Colonic mucosa (tissue), 4 donors: ENCODE measurements at regions of chr5 and their contacts with region 1.

Region 1: DNA sequence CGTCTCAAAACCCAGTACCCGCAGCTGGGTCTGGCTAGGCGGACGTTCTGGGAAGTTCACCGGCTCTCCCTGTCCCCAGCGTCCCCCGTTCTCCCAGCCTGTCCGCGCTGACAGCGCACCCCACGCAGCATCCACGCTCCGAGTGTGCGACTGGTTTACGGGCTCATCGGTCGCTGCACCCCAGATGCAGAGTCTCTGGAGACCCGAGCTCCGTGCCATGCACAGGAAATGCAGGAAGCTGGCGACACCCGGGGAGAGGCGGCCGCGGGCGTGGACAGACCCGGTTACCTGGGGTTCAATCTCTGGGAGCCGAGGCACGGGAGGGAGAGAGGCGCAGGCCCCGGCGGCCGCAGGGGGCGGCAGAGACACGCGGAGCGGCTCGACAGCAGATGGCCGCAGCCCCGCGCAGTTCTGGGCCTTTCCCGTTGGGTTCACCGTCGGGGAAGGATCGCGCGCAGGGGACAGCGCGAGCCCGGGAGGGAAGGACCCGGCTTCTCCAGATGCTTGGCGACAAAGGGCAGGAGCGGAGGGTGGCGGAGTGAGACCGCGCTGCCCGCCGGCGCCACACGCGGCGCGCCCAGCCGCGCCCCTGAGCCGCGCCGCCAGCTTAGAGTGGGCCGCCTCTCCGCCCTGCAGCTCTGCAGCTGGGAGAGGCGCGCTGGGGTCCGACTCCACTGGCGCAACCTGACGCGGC is 558 bp downstream of the SHROOM1 start:
- DNase-seq: peak; percentile 84
- H3K4me3 ChIP-seq: peak overlapping the region; percentile 85
- H3K27ac ChIP-seq: peak overlapping the region; percentile 96
- H3K4me1 ChIP-seq: no peaks in the 10 kb centered on the region
- H3K27me3 ChIP-seq: no peaks in the 10 kb centered on the region
- CTCF ChIP-seq: peak; percentile 91

Region 2: GRCh38 chr5:132866342-132867045 is 36.6 kb after region 1 on chr5 and contains the starts of genes GDF9 and UQCRQ:
- intact Hi-C with region 1: loop called (anchors 5 kb)
- DNase-seq: peak; percentile 98
- H3K4me3 ChIP-seq: peak within 1 kb of the TSS; percentile 72
- H3K27ac ChIP-seq: peak within 1 kb of the TSS; percentile 83
- H3K4me1 ChIP-seq: peaks cover 7% of the 10 kb centered on the region
- H3K27me3 ChIP-seq: no peaks in the 10 kb centered on the region
- CTCF ChIP-seq: no peak
- total RNA-seq, gene GDF9: 0.64 to 0.69 TPM
- total RNA-seq, gene UQCRQ: 885 to 920 TPM

Region 3: GRCh38 chr5:132883261-132883834 is 53.5 kb after region 1 on chr5:
- intact Hi-C with region 1: loop called (anchors 5 kb)
- DNase-seq: peak; percentile 47
- H3K4me3 ChIP-seq: no peak overlapping the region
- H3K27ac ChIP-seq: no peak overlapping the region
- H3K4me1 ChIP-seq: no peaks in the 10 kb centered on the region
- H3K27me3 ChIP-seq: no peaks in the 10 kb centered on the region
- CTCF ChIP-seq: peak; percentile 59